ENCODE measurements at regions of chr19 and their contacts with region 1.

Region 1: DNA sequence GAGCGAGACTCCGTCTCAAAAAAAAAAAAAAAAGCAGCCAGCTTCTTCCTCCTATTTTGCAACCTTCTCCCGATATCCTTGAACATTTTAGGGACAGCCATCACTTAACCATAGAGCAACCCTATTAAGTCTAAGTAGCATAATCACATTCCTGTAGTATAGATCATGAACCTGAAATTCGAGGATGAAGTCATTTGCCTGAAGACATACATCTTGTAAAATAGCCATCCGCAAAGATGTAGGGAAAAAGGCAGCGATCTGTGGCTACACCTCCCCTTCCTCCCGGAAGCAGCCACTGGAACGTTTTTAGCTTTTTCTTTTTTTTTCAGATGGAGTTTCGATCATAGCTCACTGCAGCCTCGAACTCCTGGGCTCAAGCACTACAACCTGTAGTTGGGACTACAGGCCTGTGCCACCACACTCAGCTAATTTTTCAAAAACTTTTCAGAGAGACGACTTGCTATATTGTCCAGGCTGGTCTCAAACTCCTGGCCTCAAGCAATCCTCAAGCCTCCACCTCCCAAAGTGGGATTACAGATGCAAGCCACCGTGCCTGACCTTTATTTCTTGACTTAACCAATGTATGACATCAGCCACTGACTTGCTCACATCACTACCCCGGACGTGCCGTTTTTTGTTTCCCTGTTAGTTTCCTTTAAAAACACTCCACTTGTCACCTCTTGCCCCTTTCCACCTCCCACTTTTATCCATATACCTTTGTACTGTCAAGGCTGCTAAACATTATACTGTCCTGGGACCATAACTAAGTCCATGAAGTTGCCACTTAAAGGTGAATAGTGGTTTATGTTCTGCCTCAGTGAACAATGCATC is 2.0 kb upstream of the EPHX3 start:
- DNase-seq: no peak
- ATAC-seq: no peak
- H3K4me3 Mint-ChIP-seq: no peak overlapping the region
- H3K27ac Mint-ChIP-seq: no peak overlapping the region
- H3K4me1 Mint-ChIP-seq: peaks cover 26% of the 10 kb centered on the region
- H3K27me3 Mint-ChIP-seq: peaks cover 8% of the 10 kb centered on the region
- CTCF ChIP-seq: no peak

Region 2: GRCh38 chr19:15195371-15196334 is 38.6 kb before region 1 on chr19:
- CTCF ChIA-PET with region 1: no interaction called
- POLR2A ChIA-PET with region 1: no interaction called
- intact Hi-C with region 1: loop called (anchors 5 kb)
- DNase-seq: no peak
- ATAC-seq: peak; percentile 40
- H3K4me3 Mint-ChIP-seq: peak overlapping the region; percentile 44
- H3K27ac Mint-ChIP-seq: no peak overlapping the region
- H3K4me1 Mint-ChIP-seq: peaks cover 27% of the 10 kb centered on the region
- H3K27me3 Mint-ChIP-seq: peaks cover 54% of the 10 kb centered on the region
- CTCF ChIP-seq: no peak

Measured in activated B cell treated with CpG ODN at 0.5 μM for 24 hours (primary cell).